ENCODE measurements at regions of chr18 and their contacts with region 1.

Region 1: DNA sequence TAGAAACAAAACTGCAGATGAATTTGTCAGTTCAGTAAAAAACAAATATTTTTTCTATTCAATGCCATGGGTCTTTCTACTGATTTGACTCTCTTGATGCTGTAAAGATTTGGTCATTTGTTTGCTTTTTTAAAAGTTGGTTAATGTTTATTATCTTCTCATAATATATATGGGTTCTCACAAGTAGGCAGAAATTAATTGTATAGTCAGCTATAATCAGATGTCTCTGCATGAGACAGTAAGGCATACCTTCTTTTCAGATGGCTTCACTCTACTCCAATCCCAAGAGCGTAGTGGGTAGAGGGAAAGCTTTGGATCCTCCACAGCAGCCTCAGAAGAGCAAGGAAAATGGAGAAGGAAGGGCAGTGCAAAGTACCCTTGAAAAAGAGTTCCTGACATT is 1202.9 kb upstream of the CELF4 start:
- DNase-seq: no peak
- ATAC-seq: no peak
- H3K4me3 ChIP-seq: no peak overlapping the region
- H3K4me3 Mint-ChIP-seq: no peak overlapping the region
- H3K27ac ChIP-seq: no peak overlapping the region
- H3K27ac Mint-ChIP-seq: no peak overlapping the region
- H3K4me1 ChIP-seq: no peaks in the 10 kb centered on the region
- H3K4me1 Mint-ChIP-seq: no peaks in the 10 kb centered on the region
- H3K27me3 ChIP-seq: no peaks in the 10 kb centered on the region
- H3K27me3 Mint-ChIP-seq: no peaks in the 10 kb centered on the region
- CTCF ChIP-seq: no peak

Region 2: DNA sequence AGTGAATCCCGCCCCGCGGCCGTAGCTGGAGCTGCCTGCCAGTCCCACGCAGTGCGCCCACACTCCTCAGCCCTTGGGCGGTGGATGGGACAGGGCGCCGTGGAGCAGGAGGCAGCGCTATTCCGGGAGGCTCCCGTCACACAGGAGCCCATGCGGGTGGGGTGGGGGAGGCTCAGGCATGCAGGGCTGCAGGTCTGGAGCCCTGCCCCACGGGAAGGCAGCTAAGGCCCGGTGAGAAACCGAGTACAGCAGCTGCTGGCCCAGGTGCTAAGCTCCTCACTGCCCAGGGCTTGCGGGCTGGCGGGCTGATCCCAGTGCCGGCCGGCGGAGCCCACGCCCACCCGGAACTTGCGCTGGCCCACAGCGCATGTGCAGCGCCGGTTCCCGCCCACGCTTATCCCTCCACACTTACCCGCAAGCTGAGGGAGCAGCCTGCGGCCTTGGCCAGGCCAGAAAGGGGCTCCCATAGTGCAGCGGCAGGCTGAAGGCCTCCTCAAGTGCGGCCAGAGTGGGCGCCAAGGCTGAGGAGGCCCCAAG is 50.1 kb before region 1 on chr18:
- CTCF ChIA-PET with region 1: no interaction called
- POLR2A ChIA-PET with region 1: no interaction called
- intact Hi-C with region 1: no loop called
- DNase-seq: no peak
- ATAC-seq: no peak
- H3K4me3 ChIP-seq: no peak overlapping the region
- H3K4me3 Mint-ChIP-seq: no peak overlapping the region
- H3K27ac ChIP-seq: no peak overlapping the region
- H3K27ac Mint-ChIP-seq: no peak overlapping the region
- H3K4me1 ChIP-seq: no peaks in the 10 kb centered on the region
- H3K4me1 Mint-ChIP-seq: no peaks in the 10 kb centered on the region
- H3K27me3 ChIP-seq: no peaks in the 10 kb centered on the region
- H3K27me3 Mint-ChIP-seq: no peaks in the 10 kb centered on the region
- CTCF ChIP-seq: no peak

Region 3: DNA sequence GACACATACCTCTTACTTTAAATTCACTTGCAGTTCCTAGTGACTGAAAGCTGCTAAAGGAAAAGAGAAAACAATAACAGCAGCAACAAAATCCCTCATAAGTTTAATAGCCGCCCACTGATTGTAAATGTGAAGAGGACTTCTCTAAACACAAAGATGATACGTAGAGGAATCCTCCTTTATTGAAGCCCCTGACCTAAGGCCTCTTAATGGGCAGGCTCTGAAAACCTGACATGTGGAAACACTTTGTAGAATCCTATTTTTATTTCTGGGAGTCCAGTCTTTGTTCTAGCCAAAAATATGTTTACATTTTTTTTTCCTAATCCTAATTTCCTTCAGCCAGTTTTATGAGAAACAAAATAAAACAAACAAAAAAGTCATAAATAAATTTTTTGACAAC is 74.8 kb after region 1 on chr18:
- CTCF ChIA-PET with region 1: no interaction called
- POLR2A ChIA-PET with region 1: no interaction called
- intact Hi-C with region 1: loop called (anchors 10 kb)
- DNase-seq: no peak
- ATAC-seq: no peak
- H3K4me3 ChIP-seq: no peak overlapping the region
- H3K4me3 Mint-ChIP-seq: no peak overlapping the region
- H3K27ac ChIP-seq: no peak overlapping the region
- H3K27ac Mint-ChIP-seq: no peak overlapping the region
- H3K4me1 ChIP-seq: no peaks in the 10 kb centered on the region
- H3K4me1 Mint-ChIP-seq: no peaks in the 10 kb centered on the region
- H3K27me3 ChIP-seq: no peaks in the 10 kb centered on the region
- H3K27me3 Mint-ChIP-seq: no peaks in the 10 kb centered on the region
- CTCF ChIP-seq: no peak

Region 4: DNA sequence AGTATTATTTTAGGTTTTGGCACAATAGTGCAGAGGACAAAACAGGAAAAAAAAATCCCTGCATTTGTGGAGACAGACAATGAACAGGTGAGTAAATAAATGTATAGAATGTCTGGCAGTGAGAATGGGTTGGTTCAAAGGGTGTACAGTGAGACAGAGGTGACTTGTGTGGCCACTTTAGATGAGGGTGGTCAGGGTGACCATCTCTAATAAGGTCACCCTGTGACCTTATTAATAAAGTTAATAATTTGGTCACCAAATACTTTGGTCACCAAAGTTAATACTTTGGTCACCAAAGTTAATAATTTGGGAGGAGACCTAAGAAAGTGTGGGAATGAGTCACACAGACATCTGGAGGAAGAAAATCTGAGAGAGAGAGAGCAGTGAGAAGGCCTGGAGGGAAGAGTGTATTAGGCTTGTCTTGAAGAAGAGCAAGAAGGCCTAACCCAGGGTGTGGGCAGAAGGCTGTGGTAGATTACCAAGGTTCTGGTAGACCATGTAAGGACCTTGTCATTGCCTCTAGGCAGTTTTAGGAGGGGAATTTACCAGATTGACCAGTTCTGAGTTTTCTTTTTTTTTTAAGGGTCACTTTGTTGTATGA is 165.5 kb after region 1 on chr18:
- CTCF ChIA-PET with region 1: no interaction called
- POLR2A ChIA-PET with region 1: no interaction called
- intact Hi-C with region 1: no loop called
- DNase-seq: no peak
- ATAC-seq: no peak
- H3K4me3 ChIP-seq: no peak overlapping the region
- H3K4me3 Mint-ChIP-seq: no peak overlapping the region
- H3K27ac ChIP-seq: no peak overlapping the region
- H3K27ac Mint-ChIP-seq: no peak overlapping the region
- H3K4me1 ChIP-seq: no peaks in the 10 kb centered on the region
- H3K4me1 Mint-ChIP-seq: no peaks in the 10 kb centered on the region
- H3K27me3 ChIP-seq: no peaks in the 10 kb centered on the region
- H3K27me3 Mint-ChIP-seq: no peaks in the 10 kb centered on the region
- CTCF ChIP-seq: no peak